ENCODE measurements at regions of chr20 and their contacts with region 1.

Region 1: DNA sequence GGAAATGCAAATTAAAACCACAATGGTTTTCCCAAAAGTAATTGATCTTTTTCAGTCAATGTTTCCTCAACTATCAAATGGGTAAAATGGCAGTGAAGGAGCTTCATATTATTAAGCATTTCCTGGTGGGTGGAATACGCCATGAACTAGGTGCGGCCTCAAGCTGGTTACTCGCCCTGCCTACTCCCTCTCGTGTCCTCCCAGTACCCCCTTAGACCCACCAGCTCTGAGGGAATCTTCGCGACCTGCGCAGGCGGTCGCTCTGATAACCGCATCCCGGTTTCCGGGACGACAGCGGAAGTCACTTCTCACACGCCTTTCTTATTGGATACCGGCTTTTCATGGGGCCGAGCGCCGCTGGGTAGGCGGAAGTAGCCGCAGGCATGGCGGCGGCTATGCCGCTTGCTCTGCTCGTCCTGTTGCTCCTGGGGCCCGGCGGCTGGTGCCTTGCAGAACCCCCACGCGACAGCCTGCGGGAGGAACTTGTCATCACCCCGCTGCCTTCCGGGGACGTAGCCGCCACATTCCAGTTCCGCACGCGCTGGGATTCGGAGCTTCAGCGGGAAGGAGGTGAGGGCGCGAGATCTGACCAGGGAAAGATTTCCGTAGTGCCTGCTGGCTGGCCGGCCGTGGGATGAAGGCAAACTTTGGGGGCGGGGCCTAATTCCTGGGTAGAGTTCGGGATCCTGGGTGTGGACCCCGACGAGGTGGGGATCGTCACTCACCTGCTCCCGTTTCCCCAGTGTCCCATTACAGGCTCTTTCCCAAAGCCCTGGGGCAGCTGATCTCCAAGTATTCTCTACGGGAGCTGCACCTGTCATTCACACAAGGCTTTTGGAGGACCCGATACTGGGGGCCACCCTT is at the start of gene PIGT:
- DNase-seq: peak; percentile 96
- H3K4me3 ChIP-seq: peak within 1 kb of the TSS; percentile 73 to 94 (median 90)
- H3K27ac ChIP-seq: peak within 1 kb of the TSS; percentile 68 to 91 (median 86)
- H3K4me1 ChIP-seq: peaks cover 18 to 48% (median 40%) of the 10 kb centered on the region in 6 donors
- H3K27me3 ChIP-seq: no peaks in the 10 kb centered on the region
- CTCF ChIP-seq: peak in 1 of 11 experiments; percentile 31
- POLR2A ChIP-seq: peak; percentile 40 to 88 (median 84)
- total RNA-seq, gene PIGT: 60.2 to 82.8 (median 69.6) TPM

Region 2: GRCh38 chr20:45052698-45053429 is 363.1 kb before region 1 on chr20:
- intact Hi-C with region 1: no loop called
- DNase-seq: no peak
- H3K4me3 ChIP-seq: no peak overlapping the region
- H3K27ac ChIP-seq: peak overlapping the region in 7 of 8 donors; percentile 7 to 78 (median 36)
- H3K4me1 ChIP-seq: peaks cover 37 to 96% (median 62%) of the 10 kb centered on the region in 6 donors
- H3K27me3 ChIP-seq: no peaks in the 10 kb centered on the region
- CTCF ChIP-seq: no peak
- POLR2A ChIP-seq: no peak

Region 3: DNA sequence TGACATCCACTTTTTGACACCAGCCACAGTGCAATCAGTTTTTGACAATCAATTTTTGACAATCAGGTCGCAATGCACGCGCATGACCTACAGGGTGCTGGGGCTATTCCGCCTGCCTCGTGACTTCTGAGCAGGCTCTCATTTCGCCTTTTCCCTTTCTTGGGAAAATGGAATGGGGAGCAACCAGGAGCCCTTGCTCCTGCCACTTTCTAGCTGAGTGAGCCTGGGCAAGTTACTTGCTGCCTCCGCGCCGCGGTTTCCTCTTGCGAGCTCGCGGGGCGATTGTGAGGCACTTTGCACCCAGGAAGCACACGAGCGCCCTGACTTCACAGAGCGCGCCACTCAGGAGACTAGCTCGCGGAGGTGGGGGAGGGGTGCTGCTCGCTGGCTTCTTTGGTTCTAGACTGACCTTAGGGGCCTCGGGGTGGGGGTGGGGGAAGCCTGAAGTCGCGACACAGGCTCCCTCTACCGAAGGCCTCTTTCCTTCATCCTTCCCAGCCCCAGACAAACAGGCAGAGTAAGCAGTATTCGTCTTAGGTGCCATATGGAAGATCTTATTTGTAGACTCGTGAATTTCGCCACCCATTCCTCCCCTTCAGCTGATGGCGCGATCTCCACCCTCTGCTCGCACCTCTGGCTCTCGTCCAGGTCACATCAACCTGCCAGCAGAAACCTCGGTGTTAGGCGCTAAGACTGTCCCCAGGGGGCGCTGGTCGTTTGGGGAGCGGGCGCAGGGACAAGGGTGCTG is 42.5 kb before region 1 on chr20:
- intact Hi-C with region 1: loop called (anchors 5 kb)
- DNase-seq: peak; percentile 97
- H3K4me3 ChIP-seq: peak overlapping the region; percentile 24 to 72 (median 48)
- H3K27ac ChIP-seq: peak overlapping the region; percentile 5 to 85 (median 75)
- H3K4me1 ChIP-seq: peaks cover 14 to 60% (median 38%) of the 10 kb centered on the region in 6 donors
- H3K27me3 ChIP-seq: no peaks in the 10 kb centered on the region
- CTCF ChIP-seq: peak; percentile 80 to 96 (median 89)
- POLR2A ChIP-seq: no peak

Measured in spleen (tissue), 13 donors.